ENCODE measurements at regions of chr11 and their contacts with region 1.

Region 1: GRCh38 chr11:88103337-88104206 is 71.7 kb downstream of the RAB38 start:
- DNase-seq: peak in 8 of 9 donors; percentile 9 to 46 (median 20)
- ATAC-seq: peak; percentile 78
- H3K4me3 ChIP-seq: no peak overlapping the region
- H3K4me3 Mint-ChIP-seq: no peak overlapping the region
- H3K27ac ChIP-seq: no peak overlapping the region
- H3K27ac Mint-ChIP-seq: no peak overlapping the region
- H3K4me1 ChIP-seq: no peaks in the 10 kb centered on the region
- H3K4me1 Mint-ChIP-seq: no peaks in the 10 kb centered on the region
- H3K27me3 ChIP-seq: peaks cover 0 to 5% of the 10 kb centered on the region in 2 donors
- H3K27me3 Mint-ChIP-seq: peaks cover 5 to 16% (median 8%) of the 10 kb centered on the region in 5 donors

Region 2: GRCh38 chr11:88231894-88232482 is 128.4 kb after region 1 on chr11:
- CTCF ChIA-PET with region 1: no interaction called
- POLR2A ChIA-PET with region 1: no interaction called
- intact Hi-C with region 1: loop called in 1 of 2 experiments (anchors 1 kb)
- DNase-seq: peak in 5 of 9 donors; percentile 1 to 50 (median 29)
- ATAC-seq: peak; percentile 65
- H3K4me3 ChIP-seq: no peak overlapping the region
- H3K4me3 Mint-ChIP-seq: no peak overlapping the region
- H3K27ac ChIP-seq: no peak overlapping the region
- H3K27ac Mint-ChIP-seq: no peak overlapping the region
- H3K4me1 ChIP-seq: no peaks in the 10 kb centered on the region
- H3K4me1 Mint-ChIP-seq: peaks cover 0 to 4% (median 0%) of the 10 kb centered on the region in 7 donors
- H3K27me3 ChIP-seq: no peaks in the 10 kb centered on the region
- H3K27me3 Mint-ChIP-seq: peaks cover 0 to 8% (median 0%) of the 10 kb centered on the region in 5 donors

Region 3: GRCh38 chr11:88886796-88887195 is 783.2 kb after region 1 on chr11:
- CTCF ChIA-PET with region 1: no interaction called
- POLR2A ChIA-PET with region 1: no interaction called
- intact Hi-C with region 1: loop called (anchors 5 to 10 kb)
- DNase-seq: peak in 4 of 9 donors; percentile 11 to 34 (median 19)
- ATAC-seq: no peak
- H3K4me3 ChIP-seq: no peak overlapping the region
- H3K4me3 Mint-ChIP-seq: no peak overlapping the region
- H3K27ac ChIP-seq: no peak overlapping the region
- H3K27ac Mint-ChIP-seq: peak overlapping the region in 3 of 9 donors; percentile 9 to 19 (median 14)
- H3K4me1 ChIP-seq: no peaks in the 10 kb centered on the region
- H3K4me1 Mint-ChIP-seq: peaks cover 0 to 1% (median 0%) of the 10 kb centered on the region in 7 donors
- H3K27me3 ChIP-seq: no peaks in the 10 kb centered on the region
- H3K27me3 Mint-ChIP-seq: no peaks in the 10 kb centered on the region

Measured in naive thymus-derived CD4-positive, alpha-beta T cell (primary cell).